Left ventricle myocardium superior (tissue), 1 donor: ENCODE measurements at regions of chr15 and their contacts with region 1.

Region 1: DNA sequence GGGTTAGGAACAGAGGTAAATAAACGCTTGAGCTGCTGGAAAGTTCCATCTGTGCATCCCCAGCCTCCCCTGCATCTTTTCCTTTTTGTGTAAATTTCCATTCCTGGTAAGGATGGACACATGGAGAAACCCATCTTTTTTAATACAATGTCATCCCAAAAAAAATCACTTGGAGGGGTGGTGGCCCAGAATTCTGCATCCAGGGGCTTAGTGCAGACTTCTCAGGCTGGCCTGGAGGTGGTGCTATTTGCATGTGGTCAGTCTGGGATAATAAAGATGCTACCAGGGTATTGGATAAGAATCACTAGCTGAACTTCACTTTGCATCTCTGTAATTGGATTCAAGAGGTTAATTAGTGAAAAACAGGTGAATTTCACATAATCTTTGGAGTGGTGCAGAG is 1.8 kb upstream of the ZSCAN2 start:
- DNase-seq: no peak
- ATAC-seq: no peak

Region 2: DNA sequence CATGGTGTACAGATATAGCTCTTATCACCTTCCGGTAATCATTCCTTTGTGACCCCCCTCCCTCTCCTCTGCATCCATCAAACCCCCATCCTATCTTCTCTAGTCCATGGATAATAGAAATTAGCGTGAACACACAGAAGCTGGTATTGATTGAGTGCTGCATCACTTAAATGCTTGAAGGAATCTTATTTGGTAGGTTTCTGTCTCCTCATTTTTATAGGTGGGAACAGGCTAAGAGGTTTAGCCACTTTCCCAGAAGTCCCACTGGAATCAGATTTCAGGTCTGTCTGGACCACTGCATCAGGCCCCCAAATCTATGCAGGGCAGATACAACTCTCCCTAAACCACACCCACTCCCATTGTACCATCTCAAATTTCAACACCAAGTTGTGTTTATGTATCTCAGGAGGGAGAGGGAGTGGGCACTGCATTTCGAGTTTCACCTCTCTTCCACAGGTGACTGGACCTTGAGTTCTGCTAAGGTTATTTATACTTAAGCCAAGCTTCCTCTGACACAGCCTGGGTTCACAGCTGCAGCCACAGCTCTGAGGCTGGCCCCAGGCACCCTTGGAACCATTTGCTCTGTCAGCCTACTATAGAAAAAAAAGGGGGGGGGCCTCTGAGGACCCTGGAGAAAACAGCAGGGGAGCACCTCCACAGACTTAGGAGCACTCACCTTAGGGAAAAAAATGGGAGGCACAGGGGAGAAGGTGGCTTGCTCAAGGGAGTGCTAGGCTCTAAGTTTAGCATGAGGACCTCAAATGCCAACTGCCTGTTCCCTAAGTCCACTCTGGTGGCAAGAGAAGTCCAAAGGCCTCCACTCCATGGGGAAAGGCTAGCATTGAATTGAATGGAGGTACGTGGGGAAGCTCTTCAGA is 61.2 kb after region 1 on chr15:
- intact Hi-C with region 1: loop called (anchors 5 kb)
- DNase-seq: no peak
- ATAC-seq: no peak

Region 3: GRCh38 chr15:84702961-84703482 is 104.1 kb after region 1 on chr15:
- intact Hi-C with region 1: no loop called
- DNase-seq: no peak
- ATAC-seq: peak; percentile 93

Region 4: DNA sequence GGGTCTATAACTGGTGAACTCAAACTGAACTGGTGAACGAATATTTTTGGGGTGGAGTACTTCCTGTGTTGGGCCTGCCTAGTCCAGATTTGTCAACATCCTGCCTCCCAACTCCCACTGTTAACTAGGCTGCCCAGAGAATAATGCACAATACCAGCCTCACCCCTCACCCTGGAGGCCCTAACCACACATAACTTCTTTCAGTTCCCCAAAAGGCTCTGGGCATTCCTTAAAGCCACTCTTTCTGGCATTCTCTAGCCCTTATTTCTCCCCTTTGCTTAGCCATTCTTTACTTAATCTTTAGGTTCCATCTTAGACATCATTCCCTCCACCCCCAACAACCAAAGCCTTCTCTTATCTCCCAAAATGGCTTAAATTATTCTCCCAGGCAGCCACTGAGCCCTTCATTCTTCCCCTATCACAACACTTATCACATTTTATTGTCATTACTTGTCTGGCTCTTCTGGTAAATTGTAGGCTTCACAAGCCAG is 126.1 kb after region 1 on chr15:
- intact Hi-C with region 1: no loop called
- DNase-seq: no peak
- ATAC-seq: peak; percentile 86